ENCODE measurements at regions of chr20 and their contacts with region 1.

Region 1: GRCh38 chr20:4084096-4084495 is 68.7 kb upstream of the RNF24 start:
- DNase-seq: no peak
- H3K4me3 ChIP-seq: no peak overlapping the region
- H3K4me3 Mint-ChIP-seq: no peak overlapping the region
- H3K27ac Mint-ChIP-seq: no peak overlapping the region
- H3K4me1 ChIP-seq: peaks cover 5% of the 10 kb centered on the region
- H3K4me1 Mint-ChIP-seq: peaks cover 4% of the 10 kb centered on the region
- H3K27me3 ChIP-seq: no peaks in the 10 kb centered on the region
- H3K27me3 Mint-ChIP-seq: no peaks in the 10 kb centered on the region
- CTCF ChIP-seq: no peak

Region 2: GRCh38 chr20:4060064-4060795 is 23.9 kb before region 1 on chr20:
- CTCF ChIA-PET with region 1: no interaction called
- POLR2A ChIA-PET with region 1: no interaction called
- intact Hi-C with region 1: no loop called
- DNase-seq: no peak
- H3K4me3 ChIP-seq: no peak overlapping the region
- H3K4me3 Mint-ChIP-seq: no peak overlapping the region
- H3K27ac Mint-ChIP-seq: no peak overlapping the region
- H3K4me1 ChIP-seq: no peaks in the 10 kb centered on the region
- H3K4me1 Mint-ChIP-seq: no peaks in the 10 kb centered on the region
- H3K27me3 ChIP-seq: no peaks in the 10 kb centered on the region
- H3K27me3 Mint-ChIP-seq: no peaks in the 10 kb centered on the region
- CTCF ChIP-seq: no peak

Region 3: GRCh38 chr20:4071178-4071693 is 12.9 kb before region 1 on chr20:
- CTCF ChIA-PET with region 1: interaction called, 10 read pairs
- POLR2A ChIA-PET with region 1: no interaction called
- intact Hi-C with region 1: no loop called
- DNase-seq: no peak
- H3K4me3 ChIP-seq: no peak overlapping the region
- H3K4me3 Mint-ChIP-seq: no peak overlapping the region
- H3K27ac Mint-ChIP-seq: no peak overlapping the region
- H3K4me1 ChIP-seq: no peaks in the 10 kb centered on the region
- H3K4me1 Mint-ChIP-seq: no peaks in the 10 kb centered on the region
- H3K27me3 ChIP-seq: no peaks in the 10 kb centered on the region
- H3K27me3 Mint-ChIP-seq: peaks cover 4% of the 10 kb centered on the region
- CTCF ChIP-seq: no peak

Region 4: GRCh38 chr20:4160761-4161305 is 76.7 kb after region 1 on chr20:
- CTCF ChIA-PET with region 1: no interaction called
- POLR2A ChIA-PET with region 1: no interaction called
- intact Hi-C with region 1: no loop called
- DNase-seq: no peak
- H3K4me3 ChIP-seq: no peak overlapping the region
- H3K4me3 Mint-ChIP-seq: no peak overlapping the region
- H3K27ac Mint-ChIP-seq: no peak overlapping the region
- H3K4me1 ChIP-seq: peaks cover 8% of the 10 kb centered on the region; the same call in 1 of the 2 replicates
- H3K4me1 Mint-ChIP-seq: peaks cover 14% of the 10 kb centered on the region
- H3K27me3 ChIP-seq: no peaks in the 10 kb centered on the region
- H3K27me3 Mint-ChIP-seq: no peaks in the 10 kb centered on the region
- CTCF ChIP-seq: no peak